Activated CD4-positive, alpha-beta memory T cell treated with anti-CD3 and anti-CD28 coated beads for 36 hours (primary cell): ENCODE measurements at regions of chr1 and their contacts with region 1.

Region 1: GRCh38 chr1:212455803-212456528 is 23.2 kb downstream of the NENF start:
- DNase-seq: peak; percentile 88
- H3K4me3 Mint-ChIP-seq: no peak overlapping the region
- H3K27ac Mint-ChIP-seq: no peak overlapping the region
- H3K4me1 Mint-ChIP-seq: peaks cover 3% of the 10 kb centered on the region
- H3K27me3 Mint-ChIP-seq: no peaks in the 10 kb centered on the region

Region 2: GRCh38 chr1:212035123-212035834 is 420.7 kb before region 1 on chr1 and contains the starts of genes DTL and INTS7:
- CTCF ChIA-PET with region 1: interaction called, 35 read pairs
- POLR2A ChIA-PET with region 1: interaction called, 3 read pairs
- intact Hi-C with region 1: no loop called
- DNase-seq: peak; percentile 99
- H3K4me3 Mint-ChIP-seq: peak within 1 kb of the TSS; percentile 97
- H3K27ac Mint-ChIP-seq: peak within 1 kb of the TSS; percentile 99
- H3K4me1 Mint-ChIP-seq: peaks cover 61% of the 10 kb centered on the region
- H3K27me3 Mint-ChIP-seq: peaks cover 2% of the 10 kb centered on the region
- total RNA-seq, gene DTL: 82.2 to 88.2 TPM
- total RNA-seq, gene INTS7: 19.3 to 19.6 TPM

Region 3: GRCh38 chr1:212101735-212102134 is 354.2 kb before region 1 on chr1:
- CTCF ChIA-PET with region 1: interaction called, 10 read pairs
- POLR2A ChIA-PET with region 1: no interaction called
- intact Hi-C with region 1: no loop called
- DNase-seq: no peak
- H3K4me3 Mint-ChIP-seq: no peak overlapping the region
- H3K27ac Mint-ChIP-seq: no peak overlapping the region
- H3K4me1 Mint-ChIP-seq: no peaks in the 10 kb centered on the region
- H3K27me3 Mint-ChIP-seq: no peaks in the 10 kb centered on the region

Region 4: DNA sequence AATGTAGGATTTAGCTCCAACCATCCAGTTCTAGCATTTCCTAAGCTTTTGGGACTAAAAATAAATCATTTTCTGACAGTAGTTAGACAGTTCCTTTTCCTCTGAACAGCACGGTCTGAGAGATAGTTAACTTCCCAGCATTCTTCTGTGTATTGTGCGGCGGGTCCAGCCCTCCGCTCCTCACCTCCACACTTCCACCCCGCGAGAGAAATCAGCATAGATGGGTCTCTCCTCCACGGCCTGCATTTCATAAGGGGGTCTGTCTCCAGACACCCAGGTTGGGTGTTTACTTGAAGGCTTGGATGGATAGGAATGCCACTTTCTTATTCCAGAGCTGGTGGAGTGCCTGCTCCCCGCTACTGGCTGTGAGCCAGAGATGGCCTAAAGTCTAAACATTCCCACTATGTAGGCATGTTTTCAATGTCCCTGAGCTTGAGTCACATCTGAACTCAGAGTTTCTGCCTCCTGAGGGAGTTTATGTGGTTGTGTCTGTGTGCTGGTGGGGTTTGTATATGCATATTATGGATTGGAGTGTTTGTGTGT is 208.7 kb before region 1 on chr1:
- CTCF ChIA-PET with region 1: no interaction called
- POLR2A ChIA-PET with region 1: no interaction called
- intact Hi-C with region 1: no loop called
- DNase-seq: no peak
- H3K4me3 Mint-ChIP-seq: no peak overlapping the region
- H3K27ac Mint-ChIP-seq: no peak overlapping the region
- H3K4me1 Mint-ChIP-seq: peaks cover 9% of the 10 kb centered on the region
- H3K27me3 Mint-ChIP-seq: no peaks in the 10 kb centered on the region

Region 5: DNA sequence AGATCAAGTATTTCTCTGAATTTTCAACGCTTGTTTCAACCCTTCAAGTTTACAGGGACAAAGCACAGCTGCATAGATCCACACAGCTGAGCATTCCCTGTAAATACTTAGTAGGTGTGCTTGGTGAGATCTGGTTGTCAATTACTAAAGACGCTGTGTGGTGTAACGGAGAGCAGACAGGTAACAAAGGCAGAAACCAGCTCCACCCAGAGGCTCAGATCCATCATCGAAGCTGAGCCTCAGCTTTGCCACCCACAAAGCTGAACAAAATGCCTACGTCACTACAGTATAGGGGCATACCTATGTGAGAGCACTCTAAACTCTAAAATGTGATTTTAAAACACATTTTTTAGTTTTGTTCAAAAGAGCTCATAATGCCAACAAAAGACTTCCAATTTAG is 80.0 kb before region 1 on chr1:
- CTCF ChIA-PET with region 1: interaction called, 13 read pairs
- POLR2A ChIA-PET with region 1: no interaction called
- intact Hi-C with region 1: no loop called
- DNase-seq: no peak
- H3K4me3 Mint-ChIP-seq: no peak overlapping the region
- H3K27ac Mint-ChIP-seq: no peak overlapping the region
- H3K4me1 Mint-ChIP-seq: no peaks in the 10 kb centered on the region
- H3K27me3 Mint-ChIP-seq: no peaks in the 10 kb centered on the region

Region 6: GRCh38 chr1:212469701-212470458 is 13.9 kb after region 1 on chr1:
- CTCF ChIA-PET with region 1: interaction called, 70 read pairs
- POLR2A ChIA-PET with region 1: no interaction called
- intact Hi-C with region 1: no loop called
- DNase-seq: no peak
- H3K4me3 Mint-ChIP-seq: no peak overlapping the region
- H3K27ac Mint-ChIP-seq: peak overlapping the region; percentile 8
- H3K4me1 Mint-ChIP-seq: no peaks in the 10 kb centered on the region
- H3K27me3 Mint-ChIP-seq: peaks cover 4% of the 10 kb centered on the region

Region 7: GRCh38 chr1:212710566-212710965 is 254.6 kb after region 1 on chr1:
- CTCF ChIA-PET with region 1: no interaction called
- POLR2A ChIA-PET with region 1: no interaction called
- intact Hi-C with region 1: no loop called
- DNase-seq: no peak
- H3K4me3 Mint-ChIP-seq: no peak overlapping the region
- H3K27ac Mint-ChIP-seq: no peak overlapping the region
- H3K4me1 Mint-ChIP-seq: peaks cover 36% of the 10 kb centered on the region
- H3K27me3 Mint-ChIP-seq: no peaks in the 10 kb centered on the region

Region 8: DNA sequence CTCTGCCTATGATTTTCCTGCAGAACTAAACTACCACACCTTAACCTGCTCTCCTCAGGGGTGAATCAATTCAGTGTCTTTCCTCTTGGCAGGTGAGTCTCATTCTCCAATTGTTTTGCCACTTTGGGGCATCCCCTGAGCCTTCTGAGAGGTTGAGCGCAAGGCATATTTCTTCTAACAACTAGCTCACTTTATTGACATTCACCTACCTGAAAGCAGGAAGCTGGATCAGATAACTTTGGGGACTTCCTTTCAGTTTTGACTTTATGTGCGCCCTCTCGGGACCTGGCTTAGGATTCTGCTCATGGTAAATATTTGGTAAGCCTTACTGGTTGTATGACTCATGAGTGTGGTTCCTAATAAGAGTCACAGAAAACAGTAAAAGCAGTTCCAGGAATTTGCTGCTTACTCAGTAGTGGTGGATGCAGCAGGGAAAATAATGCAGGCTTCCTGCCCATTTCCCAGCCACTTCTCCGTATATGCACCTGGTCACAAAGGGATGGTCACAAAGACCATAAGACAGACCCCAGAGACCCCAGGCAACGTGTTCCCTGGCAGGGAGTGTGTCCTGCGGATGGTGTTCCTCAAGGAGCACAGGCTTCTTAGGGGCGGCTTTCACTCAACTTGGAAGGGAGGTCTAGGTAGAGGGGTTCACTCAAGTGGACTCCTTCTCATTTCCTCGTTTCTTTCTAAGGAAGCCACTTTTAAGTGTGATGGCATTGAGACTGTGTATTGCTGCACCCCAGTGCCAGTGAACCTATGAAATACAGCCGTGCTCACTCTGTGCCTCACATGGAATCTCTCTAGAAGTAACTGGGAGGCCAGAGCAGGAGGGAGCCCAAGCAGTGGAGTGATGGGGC is 265.7 kb after region 1 on chr1:
- CTCF ChIA-PET with region 1: interaction called, 12 read pairs
- POLR2A ChIA-PET with region 1: no interaction called
- intact Hi-C with region 1: no loop called
- DNase-seq: peak; percentile 77
- H3K4me3 Mint-ChIP-seq: peak overlapping the region; percentile 63
- H3K27ac Mint-ChIP-seq: peak overlapping the region; percentile 94
- H3K4me1 Mint-ChIP-seq: peaks cover 58% of the 10 kb centered on the region
- H3K27me3 Mint-ChIP-seq: peaks cover 3% of the 10 kb centered on the region